ENCODE measurements at regions of chr7 and their contacts with region 1.

Region 1: DNA sequence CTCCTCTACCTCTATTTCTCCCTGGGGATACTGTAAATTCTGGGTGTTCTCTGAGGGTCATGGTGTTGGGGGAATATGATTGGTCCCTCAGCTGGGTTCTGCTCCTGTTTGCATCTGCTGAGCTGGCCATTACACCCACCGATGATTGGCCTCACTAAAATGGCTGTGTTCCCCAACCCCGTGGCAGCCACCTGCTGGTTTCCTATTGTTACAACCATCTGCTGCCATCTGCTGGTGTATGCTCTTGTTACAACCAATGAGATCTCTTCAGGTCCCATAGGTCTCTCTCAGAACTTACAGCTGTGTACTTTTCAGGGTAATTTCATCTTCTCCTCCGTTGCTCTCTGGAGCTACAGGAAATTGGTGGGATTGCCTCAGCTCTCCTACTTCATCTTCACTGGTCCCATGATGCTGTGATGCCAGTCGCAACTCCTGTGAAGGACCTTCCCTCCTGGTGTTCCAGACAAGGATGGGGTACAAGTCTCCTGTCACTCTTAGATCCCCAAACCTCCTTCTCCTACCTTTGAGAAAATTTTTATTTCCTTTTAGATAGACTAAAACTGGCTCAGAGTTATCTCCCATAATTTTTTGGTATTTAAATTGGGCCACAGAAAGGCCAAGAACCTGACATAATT is 303.5 kb upstream of the SMIM30 start:
- DNase-seq: peak; percentile 60
- H3K4me3 Mint-ChIP-seq: no peak overlapping the region
- H3K27ac Mint-ChIP-seq: no peak overlapping the region
- H3K4me1 Mint-ChIP-seq: peaks cover 4% of the 10 kb centered on the region
- H3K27me3 Mint-ChIP-seq: peaks cover 2% of the 10 kb centered on the region

Region 2: DNA sequence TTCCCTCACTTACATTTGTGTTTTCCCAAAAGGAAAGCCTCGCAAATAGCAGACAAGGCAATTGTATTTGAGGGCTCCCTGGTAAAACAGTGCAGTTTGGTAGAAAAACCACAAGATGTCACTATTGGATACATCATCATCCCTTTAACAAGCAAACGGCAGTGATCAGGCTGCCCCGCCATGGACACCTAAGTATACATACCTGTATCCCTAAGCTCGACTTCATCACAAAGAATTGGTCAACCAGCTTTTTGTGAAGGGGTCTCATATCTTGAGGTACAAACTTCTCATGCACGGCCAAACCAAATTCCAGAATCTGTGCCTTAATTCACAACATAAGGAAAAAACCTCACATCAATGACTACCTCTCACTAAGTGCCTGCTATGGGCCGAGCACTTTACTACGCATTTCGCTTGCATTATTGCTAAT is 1680.0 kb before region 1 on chr7:
- intact Hi-C with region 1: loop called (anchors 2 kb)
- DNase-seq: no peak
- H3K4me3 Mint-ChIP-seq: no peak overlapping the region
- H3K27ac Mint-ChIP-seq: no peak overlapping the region
- H3K4me1 Mint-ChIP-seq: no peaks in the 10 kb centered on the region
- H3K27me3 Mint-ChIP-seq: no peaks in the 10 kb centered on the region

Region 3: DNA sequence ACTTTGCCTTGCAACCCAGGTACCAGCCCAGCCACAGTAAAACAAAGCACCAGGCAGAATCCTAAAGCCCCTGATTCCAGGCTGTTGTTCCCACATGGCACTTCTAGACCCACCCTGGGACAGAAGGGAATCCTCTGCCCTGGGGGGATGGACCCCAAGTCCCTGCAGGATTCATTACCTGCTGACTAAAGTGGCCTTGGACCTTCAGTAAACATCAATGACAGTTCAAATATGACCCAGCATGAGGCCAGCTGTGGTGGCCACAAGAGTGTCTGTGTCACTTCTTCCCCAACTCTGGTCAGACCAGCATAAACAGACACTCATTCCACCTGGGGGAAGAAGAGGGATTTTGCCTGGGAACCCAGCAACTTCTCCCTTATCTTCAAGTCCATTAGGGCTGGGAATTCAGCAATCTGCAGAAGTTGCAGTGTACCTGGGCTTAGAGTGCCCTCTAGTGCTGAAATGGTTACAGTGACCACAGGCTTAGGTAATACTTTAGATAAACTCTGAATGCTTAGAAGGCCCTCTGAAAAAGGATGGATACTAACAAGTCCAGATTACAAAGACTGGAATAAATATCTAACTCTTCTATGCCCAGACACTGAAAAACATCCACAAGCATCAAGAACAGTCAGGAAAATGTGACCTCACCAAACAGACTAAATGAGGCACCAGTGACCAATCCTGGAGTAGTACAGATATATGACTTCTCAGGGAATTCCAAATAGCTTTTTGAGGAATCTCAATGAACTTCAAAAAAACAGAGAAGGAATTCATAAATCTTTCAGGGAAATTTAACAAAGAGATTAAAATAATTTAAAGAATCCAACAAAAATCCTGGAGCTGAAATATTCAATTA is 523.2 kb before region 1 on chr7:
- intact Hi-C with region 1: loop called (anchors 1 kb)
- DNase-seq: peak; percentile 9
- H3K4me3 Mint-ChIP-seq: no peak overlapping the region
- H3K27ac Mint-ChIP-seq: no peak overlapping the region
- H3K4me1 Mint-ChIP-seq: no peaks in the 10 kb centered on the region
- H3K27me3 Mint-ChIP-seq: no peaks in the 10 kb centered on the region

Region 4: DNA sequence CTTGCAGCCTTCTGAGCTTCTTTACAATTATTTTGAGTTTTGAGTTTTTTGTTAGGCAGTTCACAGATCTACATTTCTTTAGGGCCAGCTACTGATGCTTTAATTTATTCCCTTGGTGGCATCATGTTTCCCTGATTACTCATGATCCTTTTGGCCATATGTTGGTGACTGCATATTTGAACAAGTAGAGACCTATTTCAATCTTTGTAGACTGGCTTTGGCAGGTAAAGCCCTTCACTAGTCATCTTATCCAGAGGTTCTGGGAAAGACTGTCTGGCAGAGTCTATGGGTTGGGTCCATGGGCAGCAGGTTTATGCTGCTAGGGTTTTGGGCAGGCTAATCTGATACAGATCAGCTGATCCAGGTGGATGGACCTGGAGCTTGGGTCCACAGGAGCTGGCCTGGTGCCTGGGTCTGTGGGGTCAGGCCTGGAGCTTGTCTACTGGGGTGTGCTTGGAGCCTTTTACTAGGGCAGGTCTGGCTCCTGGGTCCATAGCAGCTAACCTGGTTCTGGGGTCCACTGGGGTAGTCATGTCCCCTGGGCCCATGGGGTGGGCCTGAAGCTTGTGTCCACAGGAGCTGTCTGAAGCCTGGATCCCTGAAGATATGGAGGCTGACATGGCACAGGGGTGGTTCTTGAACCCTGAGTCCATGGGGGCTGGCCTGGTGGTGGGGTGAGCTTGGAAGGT is 407.9 kb before region 1 on chr7:
- intact Hi-C with region 1: loop called (anchors 5 kb)
- DNase-seq: no peak
- H3K4me3 Mint-ChIP-seq: no peak overlapping the region
- H3K27ac Mint-ChIP-seq: no peak overlapping the region
- H3K4me1 Mint-ChIP-seq: no peaks in the 10 kb centered on the region
- H3K27me3 Mint-ChIP-seq: no peaks in the 10 kb centered on the region

Region 5: GRCh38 chr7:113086431-113086888 is 335.4 kb before region 1 on chr7 and contains the start of gene GPR85:
- intact Hi-C with region 1: loop called (anchors 5 kb)
- DNase-seq: no peak
- H3K4me3 Mint-ChIP-seq: peak within 1 kb of the TSS; percentile 47
- H3K27ac Mint-ChIP-seq: no peak within 1 kb of the TSS
- H3K4me1 Mint-ChIP-seq: peaks cover 7% of the 10 kb centered on the region
- H3K27me3 Mint-ChIP-seq: peaks cover 38% of the 10 kb centered on the region
- total RNA-seq, gene GPR85: not detected in 2 replicates

Region 6: DNA sequence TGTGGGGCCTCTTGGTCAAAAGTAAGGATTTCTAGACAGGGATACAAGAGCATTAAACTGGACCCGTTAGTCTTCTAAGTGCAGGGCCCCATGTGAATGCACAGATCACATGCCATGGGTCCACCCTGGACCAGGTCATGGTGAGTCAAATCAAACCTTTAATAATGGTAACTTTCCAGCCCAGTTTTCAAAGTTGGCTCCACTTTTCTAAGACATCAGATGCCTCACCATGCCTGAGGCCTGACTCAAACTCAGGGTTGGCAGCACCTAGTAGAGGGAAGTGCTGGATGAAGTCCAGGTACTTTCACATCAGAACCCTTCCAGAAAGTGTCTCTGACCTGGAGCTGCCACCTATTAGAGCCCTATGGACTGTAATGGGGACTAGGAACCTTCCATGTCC is 293.8 kb before region 1 on chr7:
- intact Hi-C with region 1: no loop called
- DNase-seq: no peak
- H3K4me3 Mint-ChIP-seq: no peak overlapping the region
- H3K27ac Mint-ChIP-seq: no peak overlapping the region
- H3K4me1 Mint-ChIP-seq: peaks cover 1% of the 10 kb centered on the region
- H3K27me3 Mint-ChIP-seq: peaks cover 2% of the 10 kb centered on the region

Region 7: DNA sequence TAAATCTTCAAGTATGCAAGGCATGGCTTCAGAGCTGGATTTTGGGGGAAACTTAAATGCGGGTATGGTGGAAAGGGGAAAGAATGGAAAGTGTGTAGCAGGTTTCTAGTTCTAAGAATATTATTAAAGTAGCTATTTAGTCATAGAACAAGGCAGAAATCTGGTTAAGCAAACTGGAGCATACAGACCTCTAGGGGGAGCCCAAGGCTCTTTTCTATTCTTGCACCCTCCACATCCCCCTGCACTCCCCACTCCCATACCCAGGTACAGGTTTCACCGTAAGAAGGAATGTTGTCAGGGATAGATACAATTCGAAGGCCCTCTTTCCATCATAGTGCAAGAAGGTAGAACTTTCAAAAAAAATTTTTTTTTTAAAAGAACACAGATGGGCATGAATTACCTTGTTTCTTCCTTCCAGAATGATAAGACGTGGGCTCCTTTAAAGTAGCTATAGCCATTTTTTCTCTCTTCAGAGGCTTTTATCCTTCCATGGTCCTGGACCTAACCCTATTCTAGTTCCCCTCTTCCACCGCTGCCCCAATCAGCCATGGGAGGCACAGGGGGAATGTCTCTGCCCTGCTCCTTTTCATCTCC is 262.0 kb before region 1 on chr7:
- intact Hi-C with region 1: loop called (anchors 1 kb)
- DNase-seq: no peak
- H3K4me3 Mint-ChIP-seq: no peak overlapping the region
- H3K27ac Mint-ChIP-seq: no peak overlapping the region
- H3K4me1 Mint-ChIP-seq: no peaks in the 10 kb centered on the region
- H3K27me3 Mint-ChIP-seq: peaks cover 5% of the 10 kb centered on the region

Region 8: GRCh38 chr7:113404245-113404644 is 17.6 kb before region 1 on chr7:
- intact Hi-C with region 1: loop called (anchors 1 kb)
- DNase-seq: no peak
- H3K4me3 Mint-ChIP-seq: no peak overlapping the region
- H3K27ac Mint-ChIP-seq: no peak overlapping the region
- H3K4me1 Mint-ChIP-seq: no peaks in the 10 kb centered on the region
- H3K27me3 Mint-ChIP-seq: peaks cover 6% of the 10 kb centered on the region

Region 9: DNA sequence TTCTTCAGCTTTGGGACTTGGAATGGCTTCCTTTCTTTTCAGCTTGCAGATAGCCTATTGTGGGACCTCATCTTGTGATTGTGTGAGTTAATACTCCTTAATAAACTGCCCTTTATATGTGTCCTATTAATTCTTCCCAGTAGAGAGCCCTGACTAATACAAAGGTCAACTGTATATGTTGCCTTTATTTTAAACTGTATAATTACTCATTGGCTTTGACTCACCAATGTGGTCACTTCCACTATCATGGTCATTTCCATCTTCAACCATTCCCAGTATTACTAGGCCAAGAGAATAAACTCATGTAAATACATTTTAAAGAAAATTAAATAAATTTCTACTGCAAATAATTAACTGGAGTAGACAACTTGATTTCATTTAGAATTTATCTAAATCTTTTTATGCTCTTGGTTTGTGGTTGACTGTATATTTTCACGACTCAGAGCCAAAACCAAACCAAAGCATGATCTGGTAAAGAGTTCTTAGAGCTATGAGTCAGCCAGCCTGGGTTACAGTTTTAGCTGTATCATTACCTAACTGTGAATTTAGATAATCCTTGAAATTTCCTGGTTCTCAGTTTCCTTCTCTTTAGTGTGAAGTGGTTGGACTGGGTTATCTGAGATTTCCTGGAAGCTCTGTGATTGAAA is 308.6 kb after region 1 on chr7:
- intact Hi-C with region 1: no loop called
- DNase-seq: no peak
- H3K4me3 Mint-ChIP-seq: no peak overlapping the region
- H3K27ac Mint-ChIP-seq: no peak overlapping the region
- H3K4me1 Mint-ChIP-seq: no peaks in the 10 kb centered on the region
- H3K27me3 Mint-ChIP-seq: no peaks in the 10 kb centered on the region